GM10248 (cell line): ENCODE measurements at regions of chr4 and their contacts with region 1.

Region 1: GRCh38 chr4:47510506-47511143 is 25.6 kb downstream of the ATP10D start:
- DNase-seq: peak; percentile 57
- CTCF ChIP-seq: peak; percentile 7

Region 2: DNA sequence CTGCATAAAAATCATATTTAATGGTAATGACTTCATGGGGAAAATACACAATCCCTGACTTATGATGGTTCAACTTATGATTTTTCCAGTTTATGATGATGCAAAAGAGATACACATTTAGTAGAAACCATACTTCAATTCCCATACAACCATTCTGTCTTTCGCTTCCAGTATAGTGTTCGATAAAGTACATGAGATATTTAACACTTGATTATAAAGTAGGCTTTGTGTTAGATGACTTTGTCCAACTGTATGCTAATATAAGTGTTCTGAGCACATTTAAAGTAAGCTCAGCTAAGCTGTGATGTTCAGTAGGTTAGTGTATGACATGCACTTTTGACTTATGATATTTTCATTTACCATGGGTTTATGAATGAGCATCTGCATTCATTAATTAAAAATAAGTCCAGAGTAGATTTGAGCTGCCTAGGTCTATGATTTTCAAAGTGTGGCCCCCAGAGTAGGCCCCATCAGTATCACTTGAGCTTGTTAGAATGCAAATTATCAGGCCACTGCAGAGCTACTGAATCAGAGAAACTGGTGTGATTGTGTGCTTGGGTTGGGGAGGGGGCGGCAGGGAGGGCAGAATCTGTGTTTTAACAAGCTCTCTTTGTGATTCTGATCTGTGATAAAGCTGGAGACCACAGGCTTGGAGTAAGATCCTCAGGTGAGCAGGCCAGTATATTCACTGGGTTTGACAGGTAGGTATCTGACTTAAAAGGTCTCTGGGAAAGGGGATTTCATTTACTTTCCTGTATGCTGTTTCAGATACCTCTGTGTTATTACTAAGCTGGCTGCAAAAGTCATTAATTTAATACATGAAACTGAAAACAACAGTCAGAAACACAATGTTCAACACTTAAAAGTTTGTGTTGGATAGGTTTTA is 17.1 kb before region 1 on chr4:
- CTCF ChIA-PET with region 1: interaction called, 25 read pairs
- POLR2A ChIA-PET with region 1: no interaction called
- DNase-seq: no peak
- CTCF ChIP-seq: no peak

Region 3: DNA sequence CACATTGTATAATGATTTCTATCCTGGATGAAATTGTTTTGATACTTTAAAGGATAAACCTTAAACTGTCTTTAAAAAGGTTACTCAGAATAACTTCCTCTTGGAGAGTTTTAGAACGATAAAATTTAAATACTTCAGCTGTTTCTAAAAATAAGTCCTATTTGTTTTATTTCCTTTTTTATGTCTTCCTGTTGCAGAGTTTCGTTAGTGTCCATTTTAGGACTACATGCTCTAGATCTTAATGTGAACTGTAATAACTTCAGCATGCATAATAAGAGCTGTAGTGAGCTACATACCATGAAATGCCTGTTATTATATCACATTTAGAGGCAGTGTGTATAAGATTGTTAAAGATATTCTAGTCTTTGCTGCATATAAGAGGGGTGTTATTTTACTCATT is 10.9 kb before region 1 on chr4:
- CTCF ChIA-PET with region 1: interaction called, 25 read pairs
- POLR2A ChIA-PET with region 1: no interaction called
- DNase-seq: no peak
- CTCF ChIP-seq: no peak